ENCODE measurements at regions of chr4 and their contacts with region 1.

Region 1: DNA sequence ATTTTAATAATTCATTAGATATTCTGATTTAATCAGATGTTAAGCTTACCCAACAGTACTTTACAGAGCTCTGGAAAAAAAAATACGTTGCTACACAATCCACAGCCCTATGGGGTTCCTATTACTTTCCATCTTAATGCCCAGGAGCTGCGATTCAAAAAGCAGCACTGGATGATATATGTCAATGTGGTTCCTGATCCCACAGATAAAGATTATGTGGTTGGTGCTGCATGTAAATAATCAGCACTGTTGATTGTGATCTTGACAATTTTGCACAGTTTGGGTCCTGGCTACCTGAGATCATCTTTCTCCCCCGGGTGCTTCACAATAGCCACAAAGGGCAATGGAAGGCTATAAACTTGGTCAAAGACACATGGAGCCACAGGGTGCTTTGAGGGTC is 72.7 kb upstream of the DCLK2 start:
- DNase-seq: no peak
- ATAC-seq: no peak
- H3K4me3 ChIP-seq: no peak overlapping the region
- H3K4me3 Mint-ChIP-seq: no peak overlapping the region
- H3K27ac ChIP-seq: no peak overlapping the region
- H3K27ac Mint-ChIP-seq: no peak overlapping the region
- H3K4me1 ChIP-seq: no peaks in the 10 kb centered on the region
- H3K4me1 Mint-ChIP-seq: no peaks in the 10 kb centered on the region
- H3K27me3 ChIP-seq: no peaks in the 10 kb centered on the region
- H3K27me3 Mint-ChIP-seq: peaks cover 7 to 14% of the 10 kb centered on the region in 2 donors

Region 2: DNA sequence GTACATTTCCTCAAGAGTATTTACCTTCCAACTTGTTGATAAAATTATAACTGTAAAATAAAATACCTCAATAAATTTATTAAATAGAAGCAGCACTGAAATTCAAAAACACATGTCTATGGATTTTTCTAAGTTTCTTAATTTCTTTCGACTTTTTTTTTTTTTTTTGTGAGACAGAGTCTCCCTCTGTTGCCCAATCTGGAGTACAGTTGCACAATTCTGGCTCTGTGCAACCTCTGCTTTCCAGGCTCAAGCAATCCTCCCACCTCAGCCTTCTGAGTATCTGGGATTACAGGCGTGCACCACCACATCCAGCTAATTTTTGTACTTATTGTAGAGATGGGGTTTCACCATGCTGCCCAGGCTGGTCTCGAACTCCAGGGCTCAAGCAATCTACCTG is 269.8 kb before region 1 on chr4:
- CTCF ChIA-PET with region 1: no interaction called
- POLR2A ChIA-PET with region 1: no interaction called
- DNase-seq: no peak
- ATAC-seq: no peak
- H3K4me3 ChIP-seq: no peak overlapping the region
- H3K4me3 Mint-ChIP-seq: no peak overlapping the region
- H3K27ac ChIP-seq: no peak overlapping the region
- H3K27ac Mint-ChIP-seq: no peak overlapping the region
- H3K4me1 ChIP-seq: no peaks in the 10 kb centered on the region
- H3K4me1 Mint-ChIP-seq: no peaks in the 10 kb centered on the region
- H3K27me3 ChIP-seq: no peaks in the 10 kb centered on the region
- H3K27me3 Mint-ChIP-seq: peaks cover 0 to 3% of the 10 kb centered on the region in 2 donors

Region 3: GRCh38 chr4:150047546-150047945 is 42.0 kb after region 1 on chr4:
- CTCF ChIA-PET with region 1: no interaction called
- POLR2A ChIA-PET with region 1: interaction called in 1 of 2 experiments, 14 read pairs
- DNase-seq: no peak
- ATAC-seq: no peak
- H3K4me3 ChIP-seq: no peak overlapping the region
- H3K4me3 Mint-ChIP-seq: no peak overlapping the region
- H3K27ac ChIP-seq: no peak overlapping the region
- H3K27ac Mint-ChIP-seq: no peak overlapping the region
- H3K4me1 ChIP-seq: no peaks in the 10 kb centered on the region
- H3K4me1 Mint-ChIP-seq: no peaks in the 10 kb centered on the region
- H3K27me3 ChIP-seq: no peaks in the 10 kb centered on the region
- H3K27me3 Mint-ChIP-seq: peaks cover 0 to 7% of the 10 kb centered on the region in 2 donors

Measured in T-cell (primary cell).